Activated CD4-positive, alpha-beta memory T cell treated with anti-CD3 and anti-CD28 coated beads, Interleukin-2, amount 10 ng/mL, durations not matched to agents 7 days and 5 days (primary cell): ENCODE measurements at regions of chr15 and their contacts with region 1.

Region 1: GRCh38 chr15:73950831-73951561 is 24.7 kb downstream of the LOXL1 start:
- DNase-seq: peak; percentile 79
- H3K4me3 Mint-ChIP-seq: no peak overlapping the region
- H3K27ac Mint-ChIP-seq: no peak overlapping the region
- H3K4me1 Mint-ChIP-seq: peaks cover 16% of the 10 kb centered on the region
- H3K27me3 Mint-ChIP-seq: no peaks in the 10 kb centered on the region

Region 2: DNA sequence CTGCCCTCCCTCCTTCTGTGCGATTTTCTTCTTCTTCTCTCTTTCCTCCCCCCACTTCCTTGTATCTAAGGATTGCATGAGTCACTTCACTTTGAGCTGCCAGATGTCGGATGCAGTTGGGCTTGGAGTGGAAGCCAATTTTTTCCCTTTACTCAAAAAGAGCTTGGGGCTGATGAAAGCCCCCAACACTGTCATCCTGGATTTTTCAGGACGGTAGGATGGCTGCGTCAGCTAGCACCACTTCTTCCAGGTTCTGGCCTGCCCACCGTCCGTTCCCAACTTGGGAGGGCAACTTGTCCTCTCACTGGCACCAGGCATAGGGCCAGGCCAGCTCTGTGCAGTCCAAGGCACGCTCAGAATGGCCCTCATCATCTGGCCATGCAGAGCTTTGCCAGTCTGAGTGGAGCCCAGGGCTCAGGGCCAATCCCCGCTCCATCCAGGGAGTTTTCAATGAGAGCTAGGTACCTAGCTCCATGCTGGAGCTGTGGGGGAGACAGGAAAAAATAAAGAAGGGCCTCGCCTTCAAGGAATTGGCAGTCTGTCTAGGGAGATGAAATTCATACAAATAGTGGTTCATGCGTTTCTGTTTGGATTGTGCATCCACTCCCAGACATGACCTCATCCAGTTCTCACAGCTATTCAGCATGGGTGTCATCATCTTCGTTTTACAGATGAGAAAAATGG is 150.2 kb before region 1 on chr15:
- CTCF ChIA-PET with region 1: no interaction called
- POLR2A ChIA-PET with region 1: no interaction called
- DNase-seq: no peak
- H3K4me3 Mint-ChIP-seq: no peak overlapping the region
- H3K27ac Mint-ChIP-seq: no peak overlapping the region
- H3K4me1 Mint-ChIP-seq: peaks cover 3% of the 10 kb centered on the region
- H3K27me3 Mint-ChIP-seq: no peaks in the 10 kb centered on the region

Region 3: DNA sequence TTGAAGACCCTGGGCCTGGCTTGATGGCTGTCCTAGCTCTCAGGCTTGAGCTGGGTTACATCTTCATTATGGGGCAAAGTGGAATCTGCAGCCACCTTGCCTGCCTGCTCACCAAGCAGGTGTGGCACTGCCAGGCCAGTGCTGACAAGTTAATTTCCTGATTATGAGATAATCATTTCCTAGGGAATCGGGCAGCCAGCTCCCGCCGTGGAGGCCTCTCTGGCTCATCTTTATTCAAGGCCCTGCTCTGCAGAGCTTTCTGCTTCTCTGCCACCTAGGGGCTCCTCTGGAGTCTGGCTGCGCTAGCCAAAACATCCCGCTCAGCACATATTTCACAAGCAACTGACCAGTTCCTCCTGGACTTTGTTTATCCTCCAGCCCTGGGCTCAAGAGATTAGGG is 14.8 kb before region 1 on chr15:
- CTCF ChIA-PET with region 1: interaction called, 15 read pairs
- POLR2A ChIA-PET with region 1: no interaction called
- DNase-seq: no peak
- H3K4me3 Mint-ChIP-seq: no peak overlapping the region
- H3K27ac Mint-ChIP-seq: no peak overlapping the region
- H3K4me1 Mint-ChIP-seq: peaks cover 20% of the 10 kb centered on the region
- H3K27me3 Mint-ChIP-seq: no peaks in the 10 kb centered on the region

Region 4: GRCh38 chr15:73964736-73965093 is 13.7 kb after region 1 on chr15:
- CTCF ChIA-PET with region 1: interaction called, 62 read pairs
- POLR2A ChIA-PET with region 1: interaction called, 5 read pairs
- DNase-seq: peak; percentile 90
- H3K4me3 Mint-ChIP-seq: peak overlapping the region; percentile 56
- H3K27ac Mint-ChIP-seq: peak overlapping the region; percentile 60
- H3K4me1 Mint-ChIP-seq: peaks cover 38% of the 10 kb centered on the region
- H3K27me3 Mint-ChIP-seq: peaks cover 8% of the 10 kb centered on the region

Region 5: GRCh38 chr15:74283368-74283767 is 332.4 kb after region 1 on chr15:
- CTCF ChIA-PET with region 1: no interaction called
- POLR2A ChIA-PET with region 1: no interaction called
- DNase-seq: no peak
- H3K4me3 Mint-ChIP-seq: no peak overlapping the region
- H3K27ac Mint-ChIP-seq: no peak overlapping the region
- H3K4me1 Mint-ChIP-seq: no peaks in the 10 kb centered on the region
- H3K27me3 Mint-ChIP-seq: peaks cover 22% of the 10 kb centered on the region